Activated naive CD4-positive, alpha-beta T cell treated with anti-CD3 and anti-CD28 coated beads for 36 hours (primary cell): ENCODE measurements at regions of chr1 and their contacts with region 1.

Region 1: GRCh38 chr1:156456622-156457465 is 43.7 kb downstream of the MEF2D start:
- DNase-seq: peak; percentile 100
- H3K4me3 Mint-ChIP-seq: peak overlapping the region; percentile 86
- H3K27ac Mint-ChIP-seq: peak overlapping the region; percentile 97
- H3K4me1 Mint-ChIP-seq: peaks cover 10% of the 10 kb centered on the region
- H3K27me3 Mint-ChIP-seq: no peaks in the 10 kb centered on the region

Region 2: DNA sequence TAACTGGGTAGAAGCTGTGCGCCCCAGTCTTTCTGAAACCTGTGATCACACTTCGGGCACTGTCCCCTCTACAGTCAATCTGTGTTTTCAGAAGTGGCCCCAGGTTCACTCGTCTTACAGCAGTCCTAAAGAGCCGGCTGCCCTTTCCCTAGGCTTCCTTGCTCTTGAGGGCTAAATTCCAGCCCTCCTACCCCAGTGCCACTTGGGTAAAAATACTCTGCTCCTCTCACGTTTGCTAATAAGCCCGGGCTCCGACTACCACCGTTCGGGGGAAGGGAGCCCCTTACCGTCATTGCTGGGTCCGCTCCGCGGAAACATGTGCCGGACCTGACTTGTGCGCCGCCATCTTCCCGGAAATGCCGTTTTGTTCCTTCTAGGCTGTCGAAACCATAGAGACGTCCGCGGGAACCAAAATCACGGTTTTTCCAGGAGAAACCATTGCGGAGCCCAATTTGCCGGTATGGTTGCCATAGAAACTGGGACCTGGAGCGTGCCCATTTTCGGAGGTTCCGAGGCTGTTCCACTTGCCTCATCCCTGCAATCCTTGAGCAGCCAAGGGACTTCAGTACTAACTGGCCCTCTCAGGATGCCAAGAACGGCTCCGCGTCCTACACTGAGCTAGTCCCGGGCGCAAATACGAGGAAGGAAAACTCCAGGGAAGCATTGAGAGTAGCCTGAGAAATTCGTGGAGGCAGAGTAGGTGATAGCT is 144.4 kb after region 1 on chr1 and contains the start of gene GPATCH4:
- CTCF ChIA-PET with region 1: interaction called, 5 read pairs
- intact Hi-C with region 1: loop called (anchors 1 kb)
- DNase-seq: peak; percentile 89
- H3K4me3 Mint-ChIP-seq: peak within 1 kb of the TSS; percentile 91
- H3K27ac Mint-ChIP-seq: peak within 1 kb of the TSS; percentile 97
- H3K4me1 Mint-ChIP-seq: peaks cover 47% of the 10 kb centered on the region
- H3K27me3 Mint-ChIP-seq: no peaks in the 10 kb centered on the region
- total RNA-seq, gene GPATCH4: 37.5 to 38.3 TPM

Region 3: DNA sequence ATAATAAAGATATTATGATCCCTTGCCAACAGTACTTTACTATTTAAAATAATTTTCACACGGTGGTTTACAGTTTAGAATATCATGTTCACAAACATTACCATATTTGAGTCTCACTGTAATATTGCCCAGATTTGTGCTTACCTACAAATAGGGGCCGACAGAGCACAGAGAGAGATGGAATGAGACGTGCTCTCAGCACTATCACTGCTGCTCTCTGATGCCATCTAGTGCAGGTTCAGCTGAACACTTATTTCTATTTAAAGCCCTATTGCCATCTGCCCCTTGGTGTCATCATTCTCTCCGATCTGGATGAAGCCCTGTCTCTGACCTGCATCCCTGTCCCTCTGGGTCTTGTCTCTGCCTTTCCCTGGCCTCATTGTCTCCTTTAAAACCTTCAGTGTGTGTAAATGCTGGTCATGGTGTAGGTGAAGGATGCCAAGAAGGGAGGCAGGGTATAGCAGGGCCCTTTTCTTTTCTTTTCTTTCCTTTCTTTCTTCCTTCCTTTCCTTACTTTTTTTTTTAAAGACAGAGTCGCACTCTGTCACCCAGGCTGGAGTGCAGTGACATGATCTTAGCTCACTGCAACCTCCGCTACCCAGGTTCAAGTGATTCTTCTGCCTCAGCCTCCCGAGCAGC is 151.3 kb after region 1 on chr1:
- CTCF ChIA-PET with region 1: interaction called, 11 read pairs
- intact Hi-C with region 1: loop called (anchors 1 kb)
- DNase-seq: peak; percentile 85
- H3K4me3 Mint-ChIP-seq: no peak overlapping the region
- H3K27ac Mint-ChIP-seq: no peak overlapping the region
- H3K4me1 Mint-ChIP-seq: peaks cover 10% of the 10 kb centered on the region
- H3K27me3 Mint-ChIP-seq: peaks cover 2% of the 10 kb centered on the region

Region 4: GRCh38 chr1:156892190-156893047 is 435.6 kb after region 1 on chr1:
- CTCF ChIA-PET with region 1: no interaction called
- intact Hi-C with region 1: no loop called
- DNase-seq: peak; percentile 92
- H3K4me3 Mint-ChIP-seq: peak overlapping the region; percentile 41
- H3K27ac Mint-ChIP-seq: no peak overlapping the region
- H3K4me1 Mint-ChIP-seq: peaks cover 11% of the 10 kb centered on the region
- H3K27me3 Mint-ChIP-seq: peaks cover 47% of the 10 kb centered on the region